ENCODE measurements at regions of chr13 and their contacts with region 1.

Region 1: DNA sequence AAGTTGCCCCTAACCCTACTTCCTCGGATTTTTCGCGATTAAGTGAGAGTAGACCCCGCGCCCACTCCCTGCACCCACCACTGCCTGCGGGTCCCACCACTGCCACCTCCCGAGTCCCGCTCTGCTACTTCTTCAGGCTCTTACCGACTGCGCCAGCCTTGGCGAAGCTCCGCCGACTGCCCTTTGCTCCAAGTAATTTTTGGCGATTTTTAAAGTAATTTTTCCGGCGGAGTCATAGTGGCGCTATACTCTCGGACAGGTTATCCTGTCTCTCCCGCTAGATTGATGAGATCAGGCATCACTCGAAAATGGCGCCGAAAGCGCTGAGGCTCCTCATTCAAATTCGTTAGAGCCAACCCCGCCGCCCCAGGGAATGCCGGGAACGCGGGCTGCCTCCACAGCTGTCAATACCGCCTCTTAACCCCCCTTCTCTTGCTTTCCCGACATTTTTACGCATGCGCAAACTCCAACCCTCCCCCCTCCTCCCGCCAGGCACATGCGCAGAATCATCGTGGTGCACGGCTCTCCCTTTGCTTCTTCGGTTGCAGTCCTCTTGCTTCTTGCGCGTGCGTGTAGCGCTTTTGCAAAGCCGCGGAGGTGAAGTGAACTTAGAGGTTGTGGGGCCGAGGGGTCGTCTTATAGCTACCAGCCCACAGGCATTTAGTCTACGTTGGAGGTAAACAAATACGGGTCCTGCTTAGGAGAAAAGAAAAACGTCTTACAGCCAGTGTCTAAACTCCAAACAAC is 66.6 kb downstream of the KCNRG start:
- DNase-seq: peak; percentile 99
- ATAC-seq: peak; percentile 76
- H3K4me3 Mint-ChIP-seq: peak overlapping the region; percentile 94
- H3K27ac Mint-ChIP-seq: peak overlapping the region; percentile 98
- H3K4me1 Mint-ChIP-seq: peaks cover 37% of the 10 kb centered on the region
- H3K27me3 Mint-ChIP-seq: peaks cover 8% of the 10 kb centered on the region

Region 2: GRCh38 chr13:49421391-49421790 is 660.5 kb before region 1 on chr13:
- CTCF ChIA-PET with region 1: no interaction called
- POLR2A ChIA-PET with region 1: no interaction called
- intact Hi-C with region 1: no loop called
- DNase-seq: peak; percentile 46
- ATAC-seq: peak; percentile 64
- H3K4me3 Mint-ChIP-seq: no peak overlapping the region
- H3K27ac Mint-ChIP-seq: no peak overlapping the region
- H3K4me1 Mint-ChIP-seq: no peaks in the 10 kb centered on the region
- H3K27me3 Mint-ChIP-seq: no peaks in the 10 kb centered on the region

Region 3: DNA sequence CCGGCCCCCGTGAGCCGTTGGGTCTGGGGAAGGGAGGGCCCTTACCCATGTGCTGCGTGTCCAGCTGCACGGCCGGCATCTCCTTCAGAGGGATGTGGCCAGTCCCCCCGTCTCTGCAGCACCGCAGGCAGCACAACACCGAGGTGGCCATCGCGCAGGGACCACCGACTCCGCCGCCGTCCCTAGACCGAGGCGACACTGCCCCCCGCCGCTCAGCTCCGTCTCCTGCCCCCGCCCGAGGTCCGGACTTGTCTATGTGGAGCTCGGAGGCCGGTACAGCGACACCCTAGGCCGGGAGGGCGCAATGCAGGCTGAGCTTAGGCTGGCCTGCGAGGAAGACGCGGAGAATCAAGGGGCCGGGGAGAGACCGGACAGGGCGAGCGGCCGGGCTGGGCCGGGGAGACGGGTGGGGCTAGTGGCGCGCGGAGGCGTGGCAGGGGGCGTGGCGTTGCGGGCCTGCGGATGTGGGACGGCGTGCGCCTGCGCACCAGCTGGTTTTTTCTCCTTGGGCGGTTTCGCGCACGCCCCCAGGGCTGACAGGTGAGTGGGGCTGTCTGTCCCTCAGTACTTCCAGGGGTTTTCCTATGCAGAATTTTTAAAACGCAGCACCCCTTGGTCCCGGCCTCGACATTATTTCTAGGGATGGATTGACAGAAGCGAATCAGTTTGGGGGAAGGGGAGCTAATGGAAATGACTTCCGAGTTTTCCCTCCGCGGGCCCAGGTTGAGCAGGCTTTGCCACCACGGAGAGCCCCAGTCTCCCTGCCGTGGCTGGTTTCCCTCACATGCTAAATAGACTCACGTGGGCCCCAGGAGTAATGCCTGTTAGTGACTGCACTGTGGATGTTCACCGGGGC is 145.5 kb before region 1 on chr13 and contains the start of gene SPRYD7:
- CTCF ChIA-PET with region 1: no interaction called
- POLR2A ChIA-PET with region 1: interaction called, 4 read pairs
- intact Hi-C with region 1: loop called in 1 of 2 experiments (anchors 1 kb)
- DNase-seq: peak; percentile 98
- ATAC-seq: peak; percentile 98
- H3K4me3 Mint-ChIP-seq: peak within 1 kb of the TSS; percentile 84
- H3K27ac Mint-ChIP-seq: peak within 1 kb of the TSS; percentile 73
- H3K4me1 Mint-ChIP-seq: peaks cover 11% of the 10 kb centered on the region
- H3K27me3 Mint-ChIP-seq: no peaks in the 10 kb centered on the region
- total RNA-seq, gene SPRYD7: 4.8 to 4.9 TPM

Region 4: DNA sequence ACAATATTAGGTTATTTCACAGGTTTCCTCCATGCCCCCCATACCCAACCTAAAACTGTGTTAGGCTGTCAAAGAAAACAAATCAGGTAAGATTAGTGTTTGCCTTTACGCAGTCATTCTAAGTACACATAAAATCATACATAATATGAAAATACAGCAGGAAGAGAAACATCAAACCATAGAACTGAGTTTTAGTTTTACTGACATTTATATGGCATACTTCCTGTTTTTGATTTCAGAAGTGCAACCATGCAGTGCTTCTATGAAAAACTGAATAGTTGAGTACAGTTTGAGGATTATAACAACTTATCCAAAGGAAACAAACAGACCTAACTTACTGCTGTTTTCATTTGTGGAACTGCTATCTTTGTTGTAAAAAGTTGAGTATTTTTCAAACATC is 24.7 kb after region 1 on chr13:
- CTCF ChIA-PET with region 1: interaction called, 14 read pairs
- POLR2A ChIA-PET with region 1: interaction called, 3 read pairs
- intact Hi-C with region 1: loop called in 1 of 2 experiments (anchors 2 kb)
- DNase-seq: no peak
- ATAC-seq: peak; percentile 55
- H3K4me3 Mint-ChIP-seq: no peak overlapping the region
- H3K27ac Mint-ChIP-seq: peak overlapping the region; percentile 75
- H3K4me1 Mint-ChIP-seq: peaks cover 50% of the 10 kb centered on the region
- H3K27me3 Mint-ChIP-seq: no peaks in the 10 kb centered on the region

Region 5: DNA sequence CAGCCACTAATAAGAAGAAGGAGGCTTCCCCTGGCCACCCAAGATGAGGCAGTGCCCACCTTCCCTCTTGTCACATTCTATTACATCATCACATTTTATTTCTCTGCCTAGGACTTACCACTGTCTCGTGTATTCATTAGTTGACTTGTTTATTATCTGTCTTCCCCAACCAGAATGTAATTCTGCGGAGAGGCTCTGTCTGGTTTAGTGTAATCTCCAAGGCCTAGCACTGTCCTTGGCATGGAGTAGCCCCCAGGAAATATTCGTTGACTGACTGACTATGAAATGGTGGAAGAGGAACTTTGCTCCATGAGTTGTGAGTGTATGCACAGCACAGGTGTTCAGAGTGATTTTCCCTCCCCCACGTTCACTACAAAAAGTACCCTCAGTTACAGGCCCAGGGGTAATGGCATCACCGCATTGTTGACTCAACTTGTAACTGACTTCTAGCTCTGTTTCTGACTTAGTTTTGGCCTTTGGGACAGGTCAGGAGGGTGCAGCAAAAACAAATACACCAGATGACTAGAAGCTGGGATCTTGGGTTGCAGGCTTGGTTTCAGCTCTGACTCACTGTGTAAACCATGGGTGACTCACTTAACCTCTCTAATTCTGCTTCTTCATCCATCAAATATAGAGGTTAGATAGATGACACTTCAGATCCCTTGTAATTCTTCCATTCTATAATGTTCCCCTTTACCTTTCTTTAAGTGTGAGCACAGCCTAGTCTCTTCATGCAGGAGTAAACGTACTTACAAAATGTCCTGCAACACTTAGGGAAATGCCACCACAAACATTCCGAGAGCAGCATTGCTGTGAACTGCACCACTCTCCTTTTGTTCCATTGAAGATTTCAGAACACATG is 163.1 kb after region 1 on chr13:
- CTCF ChIA-PET with region 1: interaction called, 3 read pairs
- POLR2A ChIA-PET with region 1: no interaction called
- intact Hi-C with region 1: loop called in 1 of 2 experiments (anchors 2 kb)
- DNase-seq: peak; percentile 80
- ATAC-seq: peak; percentile 97
- H3K4me3 Mint-ChIP-seq: no peak overlapping the region
- H3K27ac Mint-ChIP-seq: no peak overlapping the region
- H3K4me1 Mint-ChIP-seq: peaks cover 36% of the 10 kb centered on the region
- H3K27me3 Mint-ChIP-seq: peaks cover 25% of the 10 kb centered on the region

Region 6: DNA sequence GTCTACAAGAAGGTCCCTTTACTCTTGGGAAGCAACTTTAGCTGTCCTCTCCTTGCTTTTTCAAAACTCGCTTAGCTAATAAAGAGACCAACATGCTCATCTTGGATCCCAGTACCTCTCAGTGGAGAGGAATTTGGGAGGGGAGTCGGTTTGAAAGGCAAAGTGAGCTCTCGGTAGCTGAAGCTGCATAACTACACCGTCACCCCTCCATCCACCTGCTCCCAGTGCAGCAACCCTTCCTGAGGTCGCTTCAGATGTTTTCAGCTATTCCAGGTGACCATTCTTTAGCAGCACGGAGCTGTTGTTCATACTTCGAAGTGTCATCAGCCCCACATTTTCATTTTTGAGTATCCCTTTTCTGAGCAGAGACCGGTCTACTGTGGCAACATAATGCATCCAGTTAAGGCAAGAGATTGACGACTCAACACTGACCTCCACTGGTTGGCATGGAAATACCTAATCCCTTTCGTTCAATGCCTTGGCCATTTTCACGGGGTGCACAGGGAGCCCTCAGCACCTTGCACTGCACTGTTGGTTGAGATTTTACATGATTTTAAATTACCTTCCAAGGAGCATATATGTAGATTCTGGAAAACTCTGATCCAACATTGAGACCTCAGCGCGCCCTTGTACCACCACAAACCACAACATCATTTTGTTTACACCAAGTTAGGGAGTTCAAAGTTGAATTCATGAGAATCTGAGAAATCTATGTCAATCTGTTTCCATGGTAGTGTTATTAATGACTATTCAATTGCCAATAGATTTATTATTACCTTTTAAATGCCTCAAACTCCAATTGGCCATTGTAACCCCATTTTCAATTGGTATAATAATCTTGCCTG is 719.5 kb after region 1 on chr13:
- CTCF ChIA-PET with region 1: interaction called, 3 read pairs
- POLR2A ChIA-PET with region 1: no interaction called
- intact Hi-C with region 1: loop called (anchors 1 to 5 kb)
- DNase-seq: peak; percentile 78
- ATAC-seq: peak; percentile 96
- H3K4me3 Mint-ChIP-seq: no peak overlapping the region
- H3K27ac Mint-ChIP-seq: no peak overlapping the region
- H3K4me1 Mint-ChIP-seq: peaks cover 9% of the 10 kb centered on the region
- H3K27me3 Mint-ChIP-seq: peaks cover 3% of the 10 kb centered on the region

Measured in activated CD4-positive, alpha-beta T cell treated with anti-CD3 and anti-CD28 coated beads for 36 hours (primary cell).